ENCODE measurements at regions of chr7 and their contacts with region 1.

Region 1: GRCh38 chr7:123797673-123798527 is 47.1 kb upstream of the HYAL4 start:
- DNase-seq: peak; percentile 82
- H3K4me3 ChIP-seq: no peak overlapping the region
- H3K27ac ChIP-seq: no peak overlapping the region
- H3K4me1 ChIP-seq: peaks cover 7% of the 10 kb centered on the region
- H3K27me3 ChIP-seq: no peaks in the 10 kb centered on the region
- CTCF ChIP-seq: peak in 1 of 2 donors; percentile 31
- POLR2A ChIP-seq: no peak

Region 2: DNA sequence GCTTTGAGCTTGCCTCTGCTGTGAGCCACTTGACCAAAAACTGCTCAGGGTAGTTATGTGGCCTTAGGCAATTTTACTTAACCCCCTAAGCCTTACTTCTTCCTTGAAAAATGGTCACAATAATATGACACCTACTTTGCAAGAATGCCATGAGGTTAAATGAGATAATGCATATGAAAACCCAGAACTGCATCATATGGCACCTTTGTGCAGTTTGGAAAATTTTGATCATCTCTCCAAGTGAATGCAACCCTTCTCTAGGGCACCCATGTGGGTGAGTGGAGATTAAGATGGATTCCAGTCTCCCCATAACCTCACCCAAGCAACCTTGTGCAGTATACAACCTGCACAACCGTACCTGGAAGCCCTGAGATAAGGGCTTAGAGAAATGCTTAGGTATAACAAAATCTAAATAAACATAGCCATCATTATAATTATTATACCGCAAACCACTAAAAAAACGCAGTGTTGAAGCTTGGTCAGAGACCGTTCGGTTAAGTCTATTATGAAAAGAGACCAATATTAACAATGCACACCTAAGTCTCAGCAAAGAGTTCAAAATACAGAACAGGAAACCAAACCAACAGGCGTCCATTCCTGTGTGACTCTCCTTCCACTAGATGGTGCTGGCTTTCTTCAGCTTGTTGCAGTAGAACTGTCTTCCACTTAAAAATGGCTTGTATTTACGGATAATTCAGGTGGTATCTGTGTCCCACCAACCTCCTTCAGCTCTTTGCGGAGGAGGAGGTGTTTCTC is 217.3 kb before region 1 on chr7:
- CTCF ChIA-PET with region 1: interaction called, 3 read pairs
- POLR2A ChIA-PET with region 1: no interaction called
- dilution Hi-C with region 1: no loop called
- intact Hi-C with region 1: loop called (anchors 5 kb)
- DNase-seq: peak; percentile 61
- H3K4me3 ChIP-seq: no peak overlapping the region
- H3K27ac ChIP-seq: no peak overlapping the region
- H3K4me1 ChIP-seq: no peaks in the 10 kb centered on the region
- H3K27me3 ChIP-seq: no peaks in the 10 kb centered on the region
- CTCF ChIP-seq: peak; percentile 69 to 73
- POLR2A ChIP-seq: no peak

Region 3: DNA sequence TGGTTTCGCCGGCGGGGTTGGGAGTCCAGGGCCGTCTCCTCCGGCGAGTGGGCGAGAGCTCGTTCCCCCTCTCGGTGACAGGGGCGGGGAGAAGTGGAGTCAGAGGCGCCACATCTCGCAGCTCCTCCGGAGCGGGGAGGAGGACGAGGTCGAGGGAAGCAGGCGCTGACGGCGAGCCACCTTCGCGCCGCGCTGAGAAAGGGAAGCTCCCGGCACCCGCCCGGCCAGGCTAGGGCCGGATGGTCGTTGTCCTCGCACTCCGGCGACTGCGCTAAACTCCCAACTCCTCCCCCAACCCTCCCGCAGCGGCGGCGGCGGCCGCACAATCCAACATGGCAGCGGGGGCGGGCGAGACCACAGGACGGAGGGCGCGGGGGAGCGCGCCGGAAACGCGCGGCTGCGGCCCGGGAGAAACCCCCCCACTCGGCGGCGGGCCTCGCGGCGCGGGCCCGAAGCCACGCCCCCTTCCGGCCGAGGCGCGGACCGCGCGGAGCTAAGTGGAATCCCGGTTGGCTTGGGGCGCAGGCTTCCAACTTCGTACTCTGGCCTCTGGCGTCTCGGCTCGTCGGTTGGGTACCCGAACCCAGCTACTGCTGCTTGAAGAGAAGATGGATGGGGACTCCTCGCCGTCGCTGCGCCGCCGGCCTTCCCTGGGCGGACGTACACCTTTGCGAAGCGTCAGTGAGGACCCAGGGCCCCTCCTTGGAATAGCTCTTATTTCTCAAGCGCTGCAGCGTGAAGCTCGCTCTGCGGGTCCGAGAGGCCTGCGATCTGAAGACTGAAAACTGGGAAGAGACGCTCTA is 49.0 kb before region 1 on chr7 and contains the start of gene WASL:
- CTCF ChIA-PET with region 1: interaction called, 14 read pairs
- POLR2A ChIA-PET with region 1: no interaction called
- dilution Hi-C with region 1: no loop called
- intact Hi-C with region 1: no loop called
- DNase-seq: peak; percentile 89
- H3K4me3 ChIP-seq: peak within 1 kb of the TSS; percentile 93 to 98 (median 98)
- H3K27ac ChIP-seq: peak within 1 kb of the TSS; percentile 71
- H3K4me1 ChIP-seq: peaks cover 46% of the 10 kb centered on the region
- H3K27me3 ChIP-seq: no peaks in the 10 kb centered on the region
- CTCF ChIP-seq: no peak
- POLR2A ChIP-seq: peak; percentile 87
- total RNA-seq, gene WASL: 22.1 and 24.0 TPM in 2 replicates

Region 4: GRCh38 chr7:123871998-123872867 is 74.3 kb after region 1 on chr7:
- CTCF ChIA-PET with region 1: interaction called, 71 read pairs
- POLR2A ChIA-PET with region 1: no interaction called
- dilution Hi-C with region 1: no loop called
- intact Hi-C with region 1: loop called (anchors 2 kb)
- DNase-seq: peak; percentile 74
- H3K4me3 ChIP-seq: no peak overlapping the region
- H3K27ac ChIP-seq: no peak overlapping the region
- H3K4me1 ChIP-seq: no peaks in the 10 kb centered on the region
- H3K27me3 ChIP-seq: no peaks in the 10 kb centered on the region
- CTCF ChIP-seq: peak; percentile 53 to 67
- POLR2A ChIP-seq: no peak

Region 5: GRCh38 chr7:123901044-123901443 is 103.1 kb after region 1 on chr7:
- CTCF ChIA-PET with region 1: no interaction called
- POLR2A ChIA-PET with region 1: no interaction called
- dilution Hi-C with region 1: no loop called
- intact Hi-C with region 1: no loop called
- DNase-seq: no peak
- H3K4me3 ChIP-seq: no peak overlapping the region
- H3K27ac ChIP-seq: no peak overlapping the region
- H3K4me1 ChIP-seq: no peaks in the 10 kb centered on the region
- H3K27me3 ChIP-seq: no peaks in the 10 kb centered on the region
- CTCF ChIP-seq: no peak
- POLR2A ChIP-seq: no peak

Region 6: DNA sequence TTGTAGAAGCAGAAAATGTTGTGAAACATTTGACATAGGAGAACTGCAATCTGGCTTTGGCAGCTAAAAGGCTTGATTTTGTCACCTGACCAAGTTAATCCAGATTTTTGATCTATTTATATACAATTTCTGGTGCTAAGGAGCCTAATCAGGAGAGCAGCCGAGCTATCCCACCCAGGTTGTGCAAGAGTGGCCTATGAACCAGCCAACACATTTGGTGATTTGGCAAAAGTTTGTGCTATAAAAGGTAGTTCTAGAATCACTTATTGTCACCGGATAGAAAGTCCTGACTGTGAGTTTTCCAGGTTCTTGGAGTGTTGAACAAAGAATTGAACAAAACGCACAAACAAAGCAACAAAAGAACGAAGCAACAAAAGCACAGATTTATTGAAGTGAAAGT is 125.7 kb after region 1 on chr7:
- CTCF ChIA-PET with region 1: no interaction called
- POLR2A ChIA-PET with region 1: no interaction called
- dilution Hi-C with region 1: no loop called
- intact Hi-C with region 1: no loop called
- DNase-seq: no peak
- H3K4me3 ChIP-seq: no peak overlapping the region
- H3K27ac ChIP-seq: no peak overlapping the region
- H3K4me1 ChIP-seq: no peaks in the 10 kb centered on the region
- H3K27me3 ChIP-seq: no peaks in the 10 kb centered on the region
- CTCF ChIP-seq: no peak
- POLR2A ChIP-seq: no peak

Region 7: DNA sequence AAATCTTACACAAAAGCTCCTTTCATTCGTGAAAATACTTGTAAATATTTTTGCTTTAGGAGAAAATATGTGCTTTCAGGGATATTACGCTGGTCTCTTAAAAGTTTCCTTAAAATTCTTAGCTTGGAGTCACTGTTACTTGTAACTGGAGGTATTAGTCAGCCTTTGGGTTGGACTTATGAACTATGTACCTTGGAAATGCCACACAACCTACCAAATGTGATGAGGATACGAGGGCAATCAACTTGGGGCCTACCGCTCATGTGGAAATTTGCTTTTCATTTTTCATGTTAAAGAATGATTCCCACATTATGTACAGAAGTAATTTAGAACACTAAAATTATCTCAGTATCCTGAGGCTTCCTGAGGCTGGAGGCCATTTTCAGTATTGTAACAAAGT is 150.2 kb after region 1 on chr7:
- CTCF ChIA-PET with region 1: no interaction called
- POLR2A ChIA-PET with region 1: no interaction called
- dilution Hi-C with region 1: no loop called
- intact Hi-C with region 1: no loop called
- DNase-seq: no peak
- H3K4me3 ChIP-seq: no peak overlapping the region
- H3K27ac ChIP-seq: no peak overlapping the region
- H3K4me1 ChIP-seq: no peaks in the 10 kb centered on the region
- H3K27me3 ChIP-seq: no peaks in the 10 kb centered on the region
- CTCF ChIP-seq: no peak
- POLR2A ChIP-seq: no peak

Region 8: DNA sequence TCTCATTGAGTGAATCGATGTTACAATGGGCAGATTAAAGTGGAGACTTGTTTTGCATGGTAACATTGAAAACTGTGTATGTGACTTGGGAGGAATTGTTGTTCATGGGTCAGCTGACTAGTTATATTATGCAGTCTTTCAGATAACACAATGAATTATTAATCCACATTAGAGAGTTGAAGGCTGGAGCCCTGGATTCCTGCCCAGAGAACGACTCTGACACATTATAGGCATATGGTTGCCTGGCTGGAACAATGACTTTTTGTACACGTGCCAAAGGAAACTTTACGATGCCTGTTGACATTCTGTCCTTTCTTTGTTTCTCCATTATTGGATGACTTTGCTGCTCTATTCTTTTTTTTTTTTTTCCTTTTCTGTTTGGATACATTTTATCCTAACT is 287.3 kb after region 1 on chr7:
- CTCF ChIA-PET with region 1: no interaction called
- POLR2A ChIA-PET with region 1: no interaction called
- dilution Hi-C with region 1: no loop called
- intact Hi-C with region 1: loop called (anchors 5 kb)
- DNase-seq: peak; percentile 99
- H3K4me3 ChIP-seq: no peak overlapping the region
- H3K27ac ChIP-seq: peak overlapping the region; percentile 38
- H3K4me1 ChIP-seq: peaks cover 23% of the 10 kb centered on the region
- H3K27me3 ChIP-seq: no peaks in the 10 kb centered on the region
- CTCF ChIP-seq: no peak
- POLR2A ChIP-seq: no peak

Region 9: DNA sequence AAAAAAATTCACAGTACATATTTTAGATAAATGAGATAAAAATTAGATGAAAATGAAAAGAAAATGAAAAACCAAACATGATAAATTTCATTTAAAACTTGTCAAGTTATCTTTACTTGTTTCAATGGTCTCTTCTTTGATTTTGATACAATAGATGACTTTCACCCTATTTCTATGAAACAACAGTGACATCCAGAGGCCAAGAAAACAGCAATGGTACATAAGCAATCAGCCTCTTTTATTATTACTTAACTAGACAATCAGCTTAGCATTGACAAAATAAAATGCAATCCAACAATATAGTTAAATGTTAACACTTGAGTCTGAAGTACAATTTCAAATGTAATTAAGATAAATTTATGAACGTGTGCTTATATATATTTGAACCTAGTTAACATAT is 1042.5 kb after region 1 on chr7:
- CTCF ChIA-PET with region 1: no interaction called
- POLR2A ChIA-PET with region 1: no interaction called
- dilution Hi-C with region 1: no loop called
- intact Hi-C with region 1: loop called (anchors 2 kb)
- DNase-seq: peak; percentile 74
- H3K4me3 ChIP-seq: no peak overlapping the region
- H3K27ac ChIP-seq: no peak overlapping the region
- H3K4me1 ChIP-seq: peaks cover 17% of the 10 kb centered on the region
- H3K27me3 ChIP-seq: no peaks in the 10 kb centered on the region
- CTCF ChIP-seq: peak in 1 of 2 donors; percentile 5
- POLR2A ChIP-seq: no peak

Measured in endothelial cell of umbilical vein (primary cell).